Ovary (tissue), 10 donors: ENCODE measurements at regions of chr19 and their contacts with region 1.

Region 1: GRCh38 chr19:29735800-29736199 is 20.7 kb upstream of the C19orf12 start:
- DNase-seq: no peak
- H3K4me3 ChIP-seq: no peak overlapping the region
- H3K27ac ChIP-seq: no peak overlapping the region
- H3K4me1 ChIP-seq: no peaks in the 10 kb centered on the region
- H3K27me3 ChIP-seq: no peaks in the 10 kb centered on the region
- CTCF ChIP-seq: no peak
- EP300 ChIP-seq: no peak
- POLR2A ChIP-seq: no peak

Region 2: GRCh38 chr19:29819986-29820385 is 84.2 kb after region 1 on chr19:
- intact Hi-C with region 1: no loop called
- DNase-seq: no peak
- H3K4me3 ChIP-seq: no peak overlapping the region
- H3K27ac ChIP-seq: no peak overlapping the region
- H3K4me1 ChIP-seq: no peaks in the 10 kb centered on the region
- H3K27me3 ChIP-seq: no peaks in the 10 kb centered on the region
- CTCF ChIP-seq: no peak
- EP300 ChIP-seq: no peak
- POLR2A ChIP-seq: no peak

Region 3: GRCh38 chr19:29887442-29887855 is 151.6 kb after region 1 on chr19:
- intact Hi-C with region 1: no loop called
- DNase-seq: peak in 3 of 5 donors; percentile 14 to 25 (median 19)
- H3K4me3 ChIP-seq: no peak overlapping the region
- H3K27ac ChIP-seq: no peak overlapping the region
- H3K4me1 ChIP-seq: no peaks in the 10 kb centered on the region
- H3K27me3 ChIP-seq: no peaks in the 10 kb centered on the region
- CTCF ChIP-seq: no peak
- EP300 ChIP-seq: no peak
- POLR2A ChIP-seq: no peak

Region 4: GRCh38 chr19:30649934-30650614 is 914.3 kb after region 1 on chr19:
- intact Hi-C with region 1: loop called in 1 of 4 experiments (anchors 5 kb)
- DNase-seq: no peak
- H3K4me3 ChIP-seq: no peak overlapping the region
- H3K27ac ChIP-seq: no peak overlapping the region
- H3K4me1 ChIP-seq: no peaks in the 10 kb centered on the region
- H3K27me3 ChIP-seq: no peaks in the 10 kb centered on the region
- CTCF ChIP-seq: peak; percentile 30 to 55 (median 31)
- EP300 ChIP-seq: no peak
- POLR2A ChIP-seq: no peak

Region 5: GRCh38 chr19:30669329-30670010 is 933.7 kb after region 1 on chr19:
- intact Hi-C with region 1: loop called in 1 of 4 experiments (anchors 10 kb)
- DNase-seq: peak; percentile 77 to 90 (median 87)
- H3K4me3 ChIP-seq: peak overlapping the region; percentile 12
- H3K27ac ChIP-seq: peak overlapping the region; percentile 9 to 73
- H3K4me1 ChIP-seq: peaks cover 4% of the 10 kb centered on the region
- H3K27me3 ChIP-seq: no peaks in the 10 kb centered on the region
- CTCF ChIP-seq: peak; percentile 57 to 85 (median 72)
- EP300 ChIP-seq: no peak
- POLR2A ChIP-seq: no peak